Naive thymus-derived CD4-positive, alpha-beta T cell (primary cell): ENCODE measurements at regions of chr3 and their contacts with region 1.

Region 1: GRCh38 chr3:97793420-97794019 is 28.3 kb upstream of the CRYBG3 start:
- DNase-seq: peak in 7 of 9 donors; percentile 30 to 67 (median 61)
- ATAC-seq: peak; percentile 80
- H3K4me3 ChIP-seq: no peak overlapping the region
- H3K4me3 Mint-ChIP-seq: no peak overlapping the region
- H3K27ac ChIP-seq: no peak overlapping the region
- H3K27ac Mint-ChIP-seq: no peak overlapping the region
- H3K4me1 ChIP-seq: no peaks in the 10 kb centered on the region
- H3K4me1 Mint-ChIP-seq: peaks cover 0 to 3% (median 0%) of the 10 kb centered on the region in 7 donors
- H3K27me3 ChIP-seq: no peaks in the 10 kb centered on the region
- H3K27me3 Mint-ChIP-seq: no peaks in the 10 kb centered on the region

Region 2: GRCh38 chr3:96863129-96863740 is 930.3 kb before region 1 on chr3:
- CTCF ChIA-PET with region 1: no interaction called
- POLR2A ChIA-PET with region 1: no interaction called
- intact Hi-C with region 1: loop called in 1 of 2 experiments (anchors 10 kb)
- DNase-seq: no peak
- ATAC-seq: no peak
- H3K4me3 ChIP-seq: no peak overlapping the region
- H3K4me3 Mint-ChIP-seq: no peak overlapping the region
- H3K27ac ChIP-seq: no peak overlapping the region
- H3K27ac Mint-ChIP-seq: no peak overlapping the region
- H3K4me1 ChIP-seq: no peaks in the 10 kb centered on the region
- H3K4me1 Mint-ChIP-seq: no peaks in the 10 kb centered on the region
- H3K27me3 ChIP-seq: no peaks in the 10 kb centered on the region
- H3K27me3 Mint-ChIP-seq: no peaks in the 10 kb centered on the region

Region 3: GRCh38 chr3:97815149-97815917 is 21.8 kb after region 1 on chr3:
- CTCF ChIA-PET with region 1: no interaction called
- POLR2A ChIA-PET with region 1: no interaction called
- intact Hi-C with region 1: loop called in 1 of 2 experiments (anchors 2 kb)
- DNase-seq: peak in 2 of 9 donors; percentile 11 to 37
- ATAC-seq: peak; percentile 26
- H3K4me3 ChIP-seq: no peak overlapping the region
- H3K4me3 Mint-ChIP-seq: no peak overlapping the region
- H3K27ac ChIP-seq: no peak overlapping the region
- H3K27ac Mint-ChIP-seq: peak overlapping the region in 1 of 9 donors; percentile 6
- H3K4me1 ChIP-seq: no peaks in the 10 kb centered on the region
- H3K4me1 Mint-ChIP-seq: peaks cover 0 to 17% (median 0%) of the 10 kb centered on the region in 7 donors
- H3K27me3 ChIP-seq: peaks cover 0 to 3% of the 10 kb centered on the region in 2 donors
- H3K27me3 Mint-ChIP-seq: peaks cover 0 to 18% (median 6%) of the 10 kb centered on the region in 5 donors

Region 4: GRCh38 chr3:97848779-97849178 is 55.3 kb after region 1 on chr3:
- CTCF ChIA-PET with region 1: no interaction called
- POLR2A ChIA-PET with region 1: no interaction called
- intact Hi-C with region 1: no loop called
- DNase-seq: no peak
- ATAC-seq: no peak
- H3K4me3 ChIP-seq: no peak overlapping the region
- H3K4me3 Mint-ChIP-seq: no peak overlapping the region
- H3K27ac ChIP-seq: no peak overlapping the region
- H3K27ac Mint-ChIP-seq: no peak overlapping the region
- H3K4me1 ChIP-seq: no peaks in the 10 kb centered on the region
- H3K4me1 Mint-ChIP-seq: peaks cover 0 to 1% (median 0%) of the 10 kb centered on the region in 7 donors
- H3K27me3 ChIP-seq: no peaks in the 10 kb centered on the region
- H3K27me3 Mint-ChIP-seq: no peaks in the 10 kb centered on the region

Region 5: GRCh38 chr3:97940034-97940433 is 146.5 kb after region 1 on chr3:
- CTCF ChIA-PET with region 1: interaction called, 5 read pairs
- POLR2A ChIA-PET with region 1: no interaction called
- intact Hi-C with region 1: loop called (anchors 1 kb)
- DNase-seq: peak in 6 of 9 donors; percentile 5 to 41 (median 14)
- ATAC-seq: peak; percentile 48
- H3K4me3 ChIP-seq: no peak overlapping the region
- H3K4me3 Mint-ChIP-seq: no peak overlapping the region
- H3K27ac ChIP-seq: no peak overlapping the region
- H3K27ac Mint-ChIP-seq: peak overlapping the region in 2 of 9 donors; percentile 24 to 72
- H3K4me1 ChIP-seq: no peaks in the 10 kb centered on the region
- H3K4me1 Mint-ChIP-seq: peaks cover 0 to 11% (median 0%) of the 10 kb centered on the region in 7 donors
- H3K27me3 ChIP-seq: no peaks in the 10 kb centered on the region
- H3K27me3 Mint-ChIP-seq: no peaks in the 10 kb centered on the region

Region 6: GRCh38 chr3:98022978-98023820 is 229.7 kb after region 1 on chr3:
- CTCF ChIA-PET with region 1: interaction called, 49 read pairs
- POLR2A ChIA-PET with region 1: interaction called, 4 read pairs
- intact Hi-C with region 1: loop called (anchors 1 kb)
- DNase-seq: peak; percentile 72 to 96 (median 85)
- ATAC-seq: peak; percentile 85
- H3K4me3 ChIP-seq: no peak overlapping the region
- H3K4me3 Mint-ChIP-seq: peak overlapping the region in 3 of 10 donors; percentile 0 to 58 (median 8)
- H3K27ac ChIP-seq: no peak overlapping the region
- H3K27ac Mint-ChIP-seq: peak overlapping the region in 7 of 9 donors; percentile 2 to 66 (median 20)
- H3K4me1 ChIP-seq: peaks cover 0 to under 1% of the 10 kb centered on the region in 2 donors
- H3K4me1 Mint-ChIP-seq: peaks cover 2 to 27% (median 10%) of the 10 kb centered on the region in 7 donors
- H3K27me3 ChIP-seq: no peaks in the 10 kb centered on the region
- H3K27me3 Mint-ChIP-seq: peaks cover 0 to 5% (median 0%) of the 10 kb centered on the region in 5 donors

Region 7: GRCh38 chr3:98329392-98330124 is 536.0 kb after region 1 on chr3:
- CTCF ChIA-PET with region 1: no interaction called
- POLR2A ChIA-PET with region 1: no interaction called
- intact Hi-C with region 1: loop called (anchors 1 kb)
- DNase-seq: peak in 8 of 9 donors; percentile 9 to 48 (median 34)
- ATAC-seq: peak; percentile 83
- H3K4me3 ChIP-seq: no peak overlapping the region
- H3K4me3 Mint-ChIP-seq: no peak overlapping the region
- H3K27ac ChIP-seq: no peak overlapping the region
- H3K27ac Mint-ChIP-seq: peak overlapping the region in 1 of 9 donors; percentile 8
- H3K4me1 ChIP-seq: no peaks in the 10 kb centered on the region
- H3K4me1 Mint-ChIP-seq: peaks cover 0 to 25% (median 0%) of the 10 kb centered on the region in 7 donors
- H3K27me3 ChIP-seq: no peaks in the 10 kb centered on the region
- H3K27me3 Mint-ChIP-seq: peaks cover 16 to 66% (median 32%) of the 10 kb centered on the region in 5 donors